ENCODE measurements at regions of chr10 and their contacts with region 1.

Region 1: GRCh38 chr10:24989867-24990266 is 26.1 kb downstream of the ENKUR start:
- H3K4me3 Mint-ChIP-seq: no peak overlapping the region
- H3K27ac Mint-ChIP-seq: no peak overlapping the region
- H3K4me1 Mint-ChIP-seq: peaks cover 9% of the 10 kb centered on the region
- H3K27me3 Mint-ChIP-seq: peaks cover 1% of the 10 kb centered on the region

Region 2: DNA sequence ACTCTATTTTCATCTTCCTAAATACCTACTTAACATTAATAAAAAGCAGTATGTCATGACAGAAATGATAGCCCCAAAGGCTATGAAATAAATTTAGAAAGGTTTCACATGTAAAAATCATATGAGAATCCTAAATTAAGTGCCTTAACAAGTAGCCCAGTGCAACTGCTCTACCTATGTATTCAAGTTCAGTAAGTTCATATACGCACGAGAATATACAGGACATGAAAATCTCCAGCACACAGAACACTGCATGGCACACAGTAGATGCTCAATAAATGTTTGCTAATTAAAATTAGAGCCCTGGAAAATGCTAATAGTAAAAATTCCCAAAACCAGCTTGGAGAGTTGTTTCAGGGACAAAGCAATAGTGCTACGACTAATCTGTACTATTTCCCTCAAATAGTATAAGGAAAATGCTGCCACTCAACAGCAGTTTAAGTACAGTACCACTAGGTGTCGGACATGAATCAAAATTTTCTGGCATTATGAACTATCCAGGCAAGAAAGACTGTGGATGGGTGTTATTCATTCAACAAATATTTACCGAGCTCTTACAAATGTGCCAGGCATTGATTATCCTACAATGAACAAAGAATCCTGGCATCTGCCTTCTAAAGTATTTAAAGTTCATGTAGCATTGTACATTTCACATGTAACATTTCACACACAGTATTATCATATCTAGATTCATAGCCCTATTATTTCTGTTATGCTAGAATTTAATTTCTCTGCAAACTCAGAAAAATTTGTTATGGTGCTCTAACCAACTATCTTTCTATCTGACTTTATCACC is 347.0 kb before region 1 on chr10:
- intact Hi-C with region 1: loop called (anchors 1 kb)
- H3K4me3 Mint-ChIP-seq: no peak overlapping the region
- H3K27ac Mint-ChIP-seq: no peak overlapping the region
- H3K4me1 Mint-ChIP-seq: peaks cover 15% of the 10 kb centered on the region
- H3K27me3 Mint-ChIP-seq: no peaks in the 10 kb centered on the region

Region 3: GRCh38 chr10:24920907-24921881 is 68.7 kb before region 1 on chr10:
- intact Hi-C with region 1: no loop called
- H3K4me3 Mint-ChIP-seq: peak overlapping the region; percentile 23
- H3K27ac Mint-ChIP-seq: peak overlapping the region; percentile 81
- H3K4me1 Mint-ChIP-seq: peaks cover 26% of the 10 kb centered on the region
- H3K27me3 Mint-ChIP-seq: no peaks in the 10 kb centered on the region

Measured in dendritic cell treated with granulocyte-macrophage colony-stimulating factor and Interleukin-4, amounts not matched to agents 40 ng/mL and 50 ng/mL, for 4 days (primary cell).